Prostate gland (tissue), 2 donors: ENCODE measurements at regions of chr1 and their contacts with region 1.

Region 1: GRCh38 chr1:204307334-204307883 is 52.3 kb downstream of the PLEKHA6 start:
- DNase-seq: peak; percentile 83
- H3K4me3 ChIP-seq: peak overlapping the region; percentile 22 to 27
- H3K27ac ChIP-seq: peak overlapping the region; percentile 38 to 55
- H3K4me1 ChIP-seq: no peaks in the 10 kb centered on the region
- H3K27me3 ChIP-seq: no peaks in the 10 kb centered on the region
- CTCF ChIP-seq: peak in 3 of 4 experiments; percentile 53 to 69 (median 62)
- POLR2A ChIP-seq: peak; percentile 20

Region 2: DNA sequence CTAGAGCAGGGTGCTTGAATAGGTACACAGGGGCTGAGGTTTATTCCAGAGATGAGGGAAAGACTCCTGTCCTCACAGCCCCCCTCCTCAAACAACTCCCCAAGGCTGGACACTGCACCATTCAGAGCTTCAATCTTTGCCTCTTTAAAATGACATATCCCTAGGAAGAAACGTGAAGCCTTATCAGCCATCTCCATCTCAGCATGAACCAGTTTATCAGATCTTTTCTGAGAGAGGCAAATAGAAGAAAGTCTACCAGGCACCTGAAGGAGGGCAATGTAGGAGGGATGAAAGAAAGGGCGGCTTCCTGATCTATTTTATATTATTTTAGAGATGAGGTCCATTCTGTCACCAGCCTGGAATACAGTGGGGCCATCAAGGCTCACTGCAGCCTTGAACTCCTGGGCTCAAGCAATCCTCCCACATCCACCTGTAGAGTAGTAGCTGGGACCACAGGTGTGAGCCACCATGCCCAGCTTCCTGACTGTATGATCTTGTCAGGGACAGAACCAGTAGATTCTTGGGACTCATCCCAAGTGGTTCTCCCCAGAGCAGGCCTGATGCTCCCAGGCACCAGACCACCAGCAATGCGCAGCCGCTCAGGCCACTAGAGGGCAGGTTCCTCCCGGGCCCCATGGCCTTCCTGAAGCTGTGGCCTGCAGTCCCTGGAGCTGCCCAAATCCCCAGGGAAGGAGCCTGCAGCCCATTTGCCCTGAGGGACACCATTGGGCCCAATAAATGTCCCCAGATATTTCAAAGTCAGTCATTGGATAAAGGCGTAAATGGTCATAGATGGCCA is 49.3 kb before region 1 on chr1:
- intact Hi-C with region 1: loop called (anchors 5 kb)
- DNase-seq: peak; percentile 60
- H3K4me3 ChIP-seq: no peak overlapping the region
- H3K27ac ChIP-seq: no peak overlapping the region
- H3K4me1 ChIP-seq: peaks cover 18% of the 10 kb centered on the region
- H3K27me3 ChIP-seq: no peaks in the 10 kb centered on the region
- CTCF ChIP-seq: peak; percentile 38 to 75 (median 66)
- POLR2A ChIP-seq: no peak